GM10248 (cell line): ENCODE measurements at regions of chr1 and their contacts with region 1.

Region 1: DNA sequence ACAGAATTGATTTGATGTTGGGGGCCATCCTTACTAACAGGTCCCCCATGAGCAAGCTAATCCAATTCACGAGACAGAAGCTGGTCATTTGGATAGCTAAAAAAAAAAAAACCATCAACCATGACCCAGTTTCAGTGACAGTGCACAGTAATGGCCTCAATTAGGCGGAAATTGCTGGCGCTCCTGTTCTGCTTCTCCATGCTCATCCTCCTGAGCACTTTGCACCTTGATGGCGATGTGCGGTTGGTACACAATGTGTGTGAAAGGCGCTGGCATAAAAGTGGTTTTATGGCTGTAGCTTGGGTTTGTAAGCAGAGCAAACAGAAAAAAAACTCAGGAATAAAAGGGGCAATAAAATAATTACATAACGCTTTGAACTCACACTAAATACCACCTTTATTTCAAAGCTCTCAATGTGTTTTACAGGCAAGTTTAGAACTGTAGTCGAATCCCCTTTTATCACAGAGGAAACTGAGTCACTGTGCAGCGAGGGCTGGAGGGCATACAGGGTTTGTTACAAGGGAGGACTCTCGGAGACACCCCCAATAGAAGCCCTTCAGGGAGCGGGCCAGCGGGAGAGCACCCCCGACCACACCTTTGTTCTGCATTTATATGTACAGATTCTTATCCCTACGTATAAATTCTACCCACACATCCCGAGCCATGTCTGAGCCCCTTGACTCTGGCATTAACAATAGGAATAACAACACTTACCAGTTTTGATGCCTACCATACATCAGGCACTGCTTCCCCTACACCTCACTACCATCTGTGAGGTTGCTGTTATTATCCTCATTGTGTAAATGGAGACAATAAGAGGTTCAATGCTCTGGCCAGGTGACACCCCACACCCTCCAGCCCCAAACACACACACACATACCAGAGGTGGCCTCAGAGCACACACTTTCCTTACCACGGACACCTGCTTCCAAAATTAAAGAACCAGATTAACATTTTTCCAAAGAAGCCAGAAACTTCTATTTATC is 213.5 kb upstream of the IRF2BP2 start:
- DNase-seq: no peak
- CTCF ChIP-seq: no peak

Region 2: GRCh38 chr1:234836045-234836681 is 12.7 kb after region 1 on chr1:
- CTCF ChIA-PET with region 1: interaction called, 10 read pairs
- POLR2A ChIA-PET with region 1: interaction called, 5 read pairs
- DNase-seq: no peak
- CTCF ChIP-seq: no peak

Region 3: DNA sequence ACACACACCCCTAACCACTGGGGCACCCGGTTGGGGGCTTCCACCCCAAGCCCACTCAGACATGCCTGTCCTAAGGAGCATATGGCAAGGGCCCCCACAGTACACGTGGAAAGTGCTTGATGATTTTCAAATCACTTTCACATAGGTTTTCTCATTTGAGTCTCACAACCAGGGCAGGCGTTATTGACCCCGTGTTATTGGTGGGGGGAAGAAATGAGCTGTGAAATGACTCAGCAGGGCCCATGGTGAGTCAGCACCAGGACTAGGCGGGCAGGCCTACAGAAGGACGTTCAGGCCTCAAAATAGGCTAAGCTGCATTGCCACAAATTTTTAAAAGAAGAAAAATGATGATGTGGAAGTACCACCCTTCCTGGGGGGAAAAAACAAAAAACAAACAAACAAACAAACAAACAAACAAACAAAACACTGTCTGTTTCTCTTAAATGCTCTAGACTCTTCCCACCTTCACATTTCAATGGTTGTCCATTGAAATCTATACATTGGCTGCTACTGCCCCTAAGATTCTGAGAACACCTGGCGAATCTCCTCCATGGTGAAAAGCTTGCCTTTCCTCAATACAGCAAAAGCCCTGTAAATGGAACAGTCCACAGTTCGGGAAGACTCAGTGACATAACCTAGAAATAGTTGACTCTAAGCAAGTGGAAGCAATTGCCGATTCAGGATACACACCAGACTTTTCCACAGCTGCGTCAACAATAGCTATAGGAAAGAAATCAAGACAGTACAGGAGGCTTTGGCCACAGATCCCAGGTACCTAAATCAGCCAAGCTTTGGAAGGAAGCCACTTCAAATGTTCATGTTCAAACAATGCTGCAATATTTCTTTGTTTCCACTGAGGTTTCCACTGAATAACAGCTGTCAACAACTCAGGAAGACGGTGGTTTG is 70.5 kb after region 1 on chr1:
- CTCF ChIA-PET with region 1: no interaction called
- POLR2A ChIA-PET with region 1: no interaction called
- DNase-seq: peak; percentile 62
- CTCF ChIP-seq: no peak